Caco-2 (cell line): ENCODE measurements at regions of chr15 and their contacts with region 1.

Region 1: GRCh38 chr15:51622604-51623370 is at the start of gene DMXL2:
- DNase-seq: peak; percentile 80 to 85
- H3K4me3 ChIP-seq: peak within 1 kb of the TSS; percentile 84
- H3K4me3 Mint-ChIP-seq: peak within 1 kb of the TSS; percentile 95
- H3K27ac Mint-ChIP-seq: peak within 1 kb of the TSS; percentile 80
- H3K4me1 ChIP-seq: peaks cover 6% of the 10 kb centered on the region; the same call in 1 of the 2 replicates
- H3K4me1 Mint-ChIP-seq: peaks cover 7% of the 10 kb centered on the region
- H3K27me3 ChIP-seq: no peaks in the 10 kb centered on the region
- H3K27me3 Mint-ChIP-seq: peaks cover 2% of the 10 kb centered on the region
- CTCF ChIP-seq: no peak
- total RNA-seq, gene DMXL2: 7.5 TPM in 2 replicates

Region 2: GRCh38 chr15:51536965-51537574 is 85.7 kb before region 1 on chr15:
- CTCF ChIA-PET with region 1: interaction called, 4 read pairs
- POLR2A ChIA-PET with region 1: no interaction called
- intact Hi-C with region 1: loop called (anchors 2 kb)
- DNase-seq: peak in 1 of 2 experiments; percentile 14
- H3K4me3 ChIP-seq: no peak overlapping the region
- H3K4me3 Mint-ChIP-seq: no peak overlapping the region
- H3K27ac Mint-ChIP-seq: no peak overlapping the region
- H3K4me1 ChIP-seq: no peaks in the 10 kb centered on the region
- H3K4me1 Mint-ChIP-seq: no peaks in the 10 kb centered on the region
- H3K27me3 ChIP-seq: no peaks in the 10 kb centered on the region
- H3K27me3 Mint-ChIP-seq: no peaks in the 10 kb centered on the region
- CTCF ChIP-seq: peak; percentile 36 to 59